OCI-LY7 (cell line): ENCODE measurements at regions of chr3 and their contacts with region 1.

Region 1: GRCh38 chr3:7876741-7877297 is 624.8 kb upstream of the LMCD1 start:
- DNase-seq: peak; percentile 1
- H3K4me3 ChIP-seq: no peak overlapping the region
- H3K27ac ChIP-seq: no peak overlapping the region
- H3K4me1 ChIP-seq: no peaks in the 10 kb centered on the region
- CTCF ChIP-seq: no peak

Region 2: DNA sequence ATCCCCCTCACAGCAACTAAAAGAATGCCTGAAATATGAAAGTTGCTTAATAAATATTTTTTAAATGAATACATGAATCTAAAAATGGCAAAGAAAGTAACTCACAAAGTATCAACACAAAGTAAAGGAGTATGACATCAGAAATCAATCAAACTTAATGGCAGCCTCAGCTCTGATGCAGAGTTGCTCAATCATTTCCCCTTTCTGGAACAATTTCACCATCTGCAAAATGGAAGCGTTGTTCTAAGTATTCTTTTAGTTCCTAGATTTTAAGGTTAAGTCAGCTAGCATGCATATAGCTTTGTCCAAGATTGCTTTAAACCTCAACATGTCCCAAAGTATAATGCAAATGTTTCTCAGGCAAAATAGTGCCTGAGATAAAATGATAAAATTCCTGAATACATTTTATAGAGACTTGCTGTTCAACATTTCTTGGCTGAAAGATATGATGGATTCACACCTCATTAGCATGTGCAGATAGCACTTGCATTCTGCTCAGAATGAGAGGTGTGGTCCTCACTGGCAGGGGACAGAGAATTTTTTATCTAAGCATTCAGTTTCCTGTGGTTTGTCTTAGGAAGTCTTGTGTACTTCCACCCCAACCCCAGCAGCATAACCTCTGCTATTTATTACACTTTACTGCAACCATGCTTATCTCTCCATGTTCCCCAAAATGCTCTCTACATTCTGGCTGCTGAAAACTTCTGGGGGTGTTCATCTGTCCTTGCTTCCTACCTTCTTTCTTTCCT is 586.6 kb before region 1 on chr3:
- CTCF ChIA-PET with region 1: no interaction called
- POLR2A ChIA-PET with region 1: no interaction called
- intact Hi-C with region 1: no loop called
- DNase-seq: no peak
- H3K4me3 ChIP-seq: no peak overlapping the region
- H3K27ac ChIP-seq: no peak overlapping the region
- H3K4me1 ChIP-seq: no peaks in the 10 kb centered on the region
- CTCF ChIP-seq: no peak

Region 3: GRCh38 chr3:7841451-7841850 is 35.4 kb before region 1 on chr3:
- CTCF ChIA-PET with region 1: no interaction called
- POLR2A ChIA-PET with region 1: interaction called, 10 read pairs
- intact Hi-C with region 1: no loop called
- DNase-seq: no peak
- H3K4me3 ChIP-seq: no peak overlapping the region
- H3K27ac ChIP-seq: no peak overlapping the region
- H3K4me1 ChIP-seq: no peaks in the 10 kb centered on the region
- CTCF ChIP-seq: no peak